PC-9 (cell line): ENCODE measurements at regions of chr17 and their contacts with region 1.

Region 1: DNA sequence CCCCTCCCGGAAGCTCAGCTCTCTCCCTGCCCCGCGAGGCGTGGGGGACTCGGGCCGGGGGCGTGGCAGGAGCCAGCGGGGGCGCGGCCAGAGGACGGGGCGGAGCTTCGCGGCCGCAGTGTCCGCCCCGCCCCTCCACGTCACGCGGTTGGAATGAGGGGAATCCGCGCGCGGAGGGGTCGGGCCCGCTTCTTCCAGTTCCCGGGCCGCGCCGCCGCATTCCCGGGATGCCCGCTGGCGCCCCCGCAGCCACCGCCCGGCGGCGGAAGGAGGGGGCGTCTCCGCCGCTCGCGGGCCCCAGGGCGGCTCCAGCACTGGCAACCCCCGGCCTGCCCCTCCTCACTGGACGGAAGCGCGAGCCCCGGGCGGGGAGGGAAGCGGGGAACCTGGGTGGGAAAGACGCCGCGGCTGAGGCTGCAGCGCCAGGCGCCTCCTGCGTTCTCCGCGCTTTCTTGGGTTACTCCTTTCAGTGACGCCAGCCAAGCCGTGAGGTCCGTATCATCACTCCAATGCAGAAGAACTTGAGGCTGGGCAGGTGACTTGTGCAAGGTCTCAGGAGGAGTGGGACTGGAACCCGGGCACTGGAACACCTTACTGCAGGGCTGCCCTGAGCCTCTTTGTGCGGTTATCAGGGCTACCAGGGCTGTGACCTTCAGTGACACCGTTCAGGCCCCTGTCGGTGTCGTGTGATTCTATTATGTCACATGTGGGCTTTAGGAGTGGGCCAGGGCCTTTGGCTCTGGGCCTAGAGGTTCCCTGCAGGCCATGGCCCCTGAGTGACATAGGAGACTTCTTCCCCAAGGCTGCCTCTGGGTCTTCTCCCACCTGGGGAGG is 4.2 kb downstream of the MYO1C start:
- DNase-seq: peak; percentile 60 to 97
- H3K4me3 ChIP-seq: peak overlapping the region; percentile 56
- H3K27ac ChIP-seq: peak overlapping the region; percentile 45
- H3K4me1 ChIP-seq: peaks cover 58% of the 10 kb centered on the region
- H3K27me3 ChIP-seq: no peaks in the 10 kb centered on the region
- CTCF ChIP-seq: no peak

Region 2: GRCh38 chr17:1455797-1456599 is 32.2 kb before region 1 on chr17 and contains the start of gene CRK:
- CTCF ChIA-PET with region 1: no interaction called
- POLR2A ChIA-PET with region 1: interaction called, 5 read pairs
- intact Hi-C with region 1: loop called (anchors 2 kb)
- DNase-seq: peak; percentile 84 to 99
- H3K4me3 ChIP-seq: peak within 1 kb of the TSS; percentile 98
- H3K27ac ChIP-seq: peak within 1 kb of the TSS; percentile 59
- H3K4me1 ChIP-seq: peaks cover 27% of the 10 kb centered on the region
- H3K27me3 ChIP-seq: no peaks in the 10 kb centered on the region
- CTCF ChIP-seq: no peak
- total RNA-seq, gene CRK: 57.1 and 57.9 TPM in 2 replicates

Region 3: GRCh38 chr17:1474402-1475189 is 13.7 kb before region 1 on chr17:
- CTCF ChIA-PET with region 1: no interaction called
- POLR2A ChIA-PET with region 1: interaction called, 11 read pairs
- intact Hi-C with region 1: no loop called
- DNase-seq: no peak
- H3K4me3 ChIP-seq: no peak overlapping the region
- H3K27ac ChIP-seq: no peak overlapping the region
- H3K4me1 ChIP-seq: no peaks in the 10 kb centered on the region
- H3K27me3 ChIP-seq: no peaks in the 10 kb centered on the region
- CTCF ChIP-seq: no peak

Region 4: DNA sequence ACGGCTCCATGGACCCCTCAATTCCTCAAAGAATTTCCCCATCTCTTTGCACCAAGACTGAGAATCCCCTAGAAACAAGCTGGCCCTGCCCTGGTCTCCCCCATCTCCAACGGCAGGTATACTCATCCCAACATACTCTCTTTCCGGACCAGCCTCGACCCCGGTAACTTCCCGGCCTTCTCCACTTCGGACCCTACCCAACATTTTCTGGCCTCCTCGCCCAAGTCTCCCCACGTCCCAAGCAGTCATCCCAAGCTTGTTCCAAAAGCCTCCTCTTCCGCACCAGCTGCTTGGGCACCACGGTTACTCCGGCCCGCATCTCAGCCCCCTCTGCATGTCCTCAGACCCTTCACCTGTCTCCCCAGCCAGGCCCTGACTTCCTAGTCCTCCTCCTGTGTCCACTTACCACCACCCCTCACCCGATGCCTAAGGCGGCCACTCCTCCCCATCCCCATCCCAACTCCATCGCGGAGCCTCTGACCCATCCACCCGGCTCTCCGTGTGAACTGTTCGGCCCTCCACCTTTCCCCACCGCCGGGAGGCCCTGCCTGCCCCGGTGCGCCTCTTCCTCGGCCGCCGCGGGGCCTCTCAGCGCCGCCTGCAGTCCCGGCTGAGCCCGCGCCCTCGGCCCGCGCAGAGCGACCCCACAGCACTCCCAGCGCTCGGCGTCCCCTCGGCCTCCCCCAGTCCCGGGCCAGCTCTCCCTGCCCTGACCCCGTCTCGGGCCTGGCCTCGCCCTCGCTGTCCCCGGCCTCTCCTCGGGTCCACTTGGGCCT is 73.3 kb after region 1 on chr17:
- CTCF ChIA-PET with region 1: no interaction called
- POLR2A ChIA-PET with region 1: no interaction called
- intact Hi-C with region 1: loop called (anchors 1 kb)
- DNase-seq: peak in 1 of 2 experiments; percentile 36
- H3K4me3 ChIP-seq: peak overlapping the region; percentile 92
- H3K27ac ChIP-seq: no peak overlapping the region
- H3K4me1 ChIP-seq: peaks cover 21% of the 10 kb centered on the region
- H3K27me3 ChIP-seq: no peaks in the 10 kb centered on the region
- CTCF ChIP-seq: no peak; the same call in 1 of the 2 replicates